MCF 10A (cell line): ENCODE measurements at regions of chr1 and their contacts with region 1.

Region 1: GRCh38 chr1:220776720-220777326 is 9.9 kb upstream of the MTARC1 start:
- DNase-seq: peak; percentile 88
- H3K4me3 Mint-ChIP-seq: no peak overlapping the region
- H3K27ac Mint-ChIP-seq: no peak overlapping the region
- H3K4me1 Mint-ChIP-seq: no peaks in the 10 kb centered on the region
- H3K27me3 Mint-ChIP-seq: no peaks in the 10 kb centered on the region
- CTCF ChIP-seq: peak; percentile 99

Region 2: DNA sequence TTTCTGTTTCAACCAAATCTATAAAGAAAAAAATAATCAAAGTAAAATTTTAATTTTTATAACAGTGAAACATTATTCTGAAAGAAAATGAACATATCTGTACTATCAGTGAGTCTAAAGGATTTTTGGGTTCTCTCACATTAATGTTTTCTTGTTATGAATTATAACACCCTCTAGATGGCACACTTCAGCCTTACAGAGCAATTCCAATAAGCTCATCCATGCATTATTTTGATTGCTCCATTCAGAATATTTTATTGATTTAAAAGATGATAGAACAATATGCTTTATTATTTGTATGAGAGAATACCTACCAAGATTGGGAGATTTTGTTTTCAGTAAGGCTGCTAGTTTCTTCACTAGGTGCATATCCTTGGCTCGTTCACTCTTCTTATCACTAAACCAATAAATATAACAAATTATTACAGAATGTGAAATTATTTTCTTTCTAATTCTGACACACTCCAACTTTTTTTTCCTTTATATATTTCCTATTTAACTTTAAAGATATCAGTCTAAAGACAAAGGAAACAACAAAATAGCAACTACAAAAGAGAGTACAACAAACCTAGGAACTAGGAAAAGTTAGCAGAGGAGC is 587.0 kb before region 1 on chr1:
- CTCF ChIA-PET with region 1: interaction called, 115 read pairs
- POLR2A ChIA-PET with region 1: no interaction called
- intact Hi-C with region 1: loop called (anchors 1 kb)
- DNase-seq: peak; percentile 64
- H3K4me3 Mint-ChIP-seq: no peak overlapping the region
- H3K27ac Mint-ChIP-seq: no peak overlapping the region
- H3K4me1 Mint-ChIP-seq: no peaks in the 10 kb centered on the region
- H3K27me3 Mint-ChIP-seq: no peaks in the 10 kb centered on the region
- CTCF ChIP-seq: peak; percentile 66

Region 3: DNA sequence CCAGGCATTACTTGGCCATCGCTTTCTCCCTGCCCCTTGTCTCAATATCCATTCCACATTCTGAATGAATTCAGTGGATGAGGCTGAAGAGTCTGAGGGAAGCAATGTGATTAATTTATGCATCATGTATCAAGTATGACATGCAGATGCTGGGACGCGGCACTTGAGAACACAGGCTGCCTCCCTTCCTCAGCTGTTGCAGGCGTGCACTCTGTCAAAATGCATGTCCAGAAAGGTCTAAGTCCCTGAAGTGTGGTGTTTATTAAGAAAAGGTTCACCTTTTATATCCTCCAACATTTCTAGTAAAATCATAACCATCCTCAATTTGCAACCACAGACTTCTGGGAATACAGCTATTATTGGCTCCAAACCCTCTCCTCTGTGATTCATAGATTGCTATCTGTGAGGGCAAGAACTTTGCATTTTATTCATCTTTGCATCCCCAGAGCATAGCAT is 481.9 kb before region 1 on chr1:
- CTCF ChIA-PET with region 1: interaction called, 92 read pairs
- POLR2A ChIA-PET with region 1: interaction called, 3 read pairs
- intact Hi-C with region 1: loop called (anchors 1 kb)
- DNase-seq: no peak
- H3K4me3 Mint-ChIP-seq: no peak overlapping the region
- H3K27ac Mint-ChIP-seq: no peak overlapping the region
- H3K4me1 Mint-ChIP-seq: peaks cover 5% of the 10 kb centered on the region
- H3K27me3 Mint-ChIP-seq: no peaks in the 10 kb centered on the region
- CTCF ChIP-seq: no peak

Region 4: DNA sequence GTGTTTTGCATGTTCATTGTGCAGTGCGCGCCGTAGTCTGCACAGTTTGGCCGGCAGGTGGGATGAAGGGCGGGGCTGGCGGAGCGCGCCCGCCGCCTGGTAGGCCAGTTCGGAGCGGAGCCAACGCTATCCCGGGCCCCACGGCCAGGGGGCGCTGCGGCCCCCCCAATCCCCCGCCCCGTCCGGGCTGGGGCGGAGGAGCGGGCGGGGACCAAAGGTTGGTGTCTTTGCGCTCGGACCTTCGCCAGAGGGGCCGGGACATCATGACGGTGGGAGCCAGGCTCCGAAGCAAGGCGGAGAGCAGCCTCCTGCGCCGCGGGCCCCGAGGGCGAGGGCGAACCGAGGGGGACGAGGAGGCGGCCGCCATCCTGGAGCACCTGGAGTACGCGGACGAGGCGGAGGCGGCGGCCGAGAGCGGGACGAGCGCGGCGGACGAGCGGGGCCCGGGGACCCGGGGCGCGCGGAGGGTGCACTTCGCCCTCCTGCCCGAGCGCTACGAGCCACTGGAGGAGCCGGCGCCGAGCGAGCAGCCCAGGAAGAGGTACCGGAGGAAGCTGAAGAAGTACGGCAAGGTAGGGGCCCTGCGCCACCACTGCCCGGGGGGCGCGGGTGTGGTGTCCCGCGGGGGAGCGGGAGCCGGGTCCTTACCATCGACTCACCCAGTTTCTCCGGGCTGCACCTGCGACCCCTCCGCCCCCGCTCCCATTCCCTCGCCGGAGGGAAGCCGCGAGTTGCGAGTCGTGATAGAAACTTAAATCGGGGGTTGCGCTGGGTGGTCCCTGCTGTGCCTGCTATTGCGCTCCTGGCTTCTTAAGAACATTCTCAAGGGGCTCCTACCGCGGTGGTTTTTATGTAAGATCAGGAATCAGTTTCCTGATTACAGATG is 86.4 kb before region 1 on chr1 and contains the start of gene C1orf115:
- CTCF ChIA-PET with region 1: interaction called, 35 read pairs
- POLR2A ChIA-PET with region 1: no interaction called
- intact Hi-C with region 1: loop called (anchors 1 kb)
- DNase-seq: peak; percentile 81
- H3K4me3 Mint-ChIP-seq: peak within 1 kb of the TSS; percentile 83
- H3K27ac Mint-ChIP-seq: no peak within 1 kb of the TSS
- H3K4me1 Mint-ChIP-seq: peaks cover 7% of the 10 kb centered on the region
- H3K27me3 Mint-ChIP-seq: no peaks in the 10 kb centered on the region
- CTCF ChIP-seq: peak; percentile 100
- total RNA-seq, gene C1orf115: 1.6 TPM in 2 replicates

Region 5: DNA sequence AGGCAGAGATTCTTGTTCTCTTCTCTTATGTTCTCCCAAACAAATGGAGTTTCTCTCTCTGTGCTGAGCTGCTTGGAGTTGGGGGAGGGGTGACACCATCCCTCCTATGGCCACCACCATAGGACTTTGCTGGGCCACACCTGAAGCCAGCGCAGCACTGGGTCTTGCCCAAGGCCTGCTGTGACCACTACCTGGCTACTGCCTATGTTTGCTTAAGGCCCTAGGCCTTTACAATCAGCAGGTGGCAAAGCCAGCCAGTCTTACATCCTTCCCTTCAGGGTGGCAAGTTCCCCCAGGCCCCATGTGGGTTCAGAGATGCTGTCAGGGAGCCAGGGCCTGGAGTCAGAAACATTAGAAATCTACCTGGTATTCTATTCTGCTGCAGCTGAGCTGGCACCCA is 35.0 kb before region 1 on chr1:
- CTCF ChIA-PET with region 1: interaction called, 35 read pairs
- POLR2A ChIA-PET with region 1: no interaction called
- intact Hi-C with region 1: no loop called
- DNase-seq: no peak
- H3K4me3 Mint-ChIP-seq: no peak overlapping the region
- H3K27ac Mint-ChIP-seq: no peak overlapping the region
- H3K4me1 Mint-ChIP-seq: no peaks in the 10 kb centered on the region
- H3K27me3 Mint-ChIP-seq: no peaks in the 10 kb centered on the region
- CTCF ChIP-seq: no peak

Region 6: GRCh38 chr1:220803401-220804201 is 26.8 kb after region 1 on chr1:
- CTCF ChIA-PET with region 1: interaction called, 142 read pairs
- POLR2A ChIA-PET with region 1: no interaction called
- intact Hi-C with region 1: loop called (anchors 1 kb)
- DNase-seq: peak; percentile 74
- H3K4me3 Mint-ChIP-seq: no peak overlapping the region
- H3K27ac Mint-ChIP-seq: no peak overlapping the region
- H3K4me1 Mint-ChIP-seq: no peaks in the 10 kb centered on the region
- H3K27me3 Mint-ChIP-seq: no peaks in the 10 kb centered on the region
- CTCF ChIP-seq: peak; percentile 97

Region 7: GRCh38 chr1:220843481-220844011 is 66.7 kb after region 1 on chr1:
- CTCF ChIA-PET with region 1: no interaction called
- POLR2A ChIA-PET with region 1: no interaction called
- intact Hi-C with region 1: no loop called
- DNase-seq: no peak
- H3K4me3 Mint-ChIP-seq: no peak overlapping the region
- H3K27ac Mint-ChIP-seq: no peak overlapping the region
- H3K4me1 Mint-ChIP-seq: no peaks in the 10 kb centered on the region
- H3K27me3 Mint-ChIP-seq: no peaks in the 10 kb centered on the region
- CTCF ChIP-seq: no peak